K562 (cell line): ENCODE measurements at regions of chr17 and their contacts with region 1.

Region 1: GRCh38 chr17:1908699-1909309 is 79.0 kb downstream of the RPA1 start:
- DNase-seq: peak; percentile 26 to 68 (median 44)
- ATAC-seq: peak; percentile 92
- H3K4me3 ChIP-seq: no peak overlapping the region
- H3K27ac ChIP-seq: no peak overlapping the region
- H3K4me1 ChIP-seq: peaks cover 0 to 16% of the 10 kb centered on the region in 2 experiments; a peak in 3 of 5 replicates
- H3K27me3 ChIP-seq: peaks cover 21 to 36% of the 10 kb centered on the region in 2 experiments; a peak in 4 of 5 replicates
- CTCF ChIP-seq: peak; percentile 58 to 77 (median 75)
- EP300 ChIP-seq: no peak
- POLR2A ChIP-seq: no peak
- RAD21 ChIP-seq: peak; percentile 71 to 84

Region 2: DNA sequence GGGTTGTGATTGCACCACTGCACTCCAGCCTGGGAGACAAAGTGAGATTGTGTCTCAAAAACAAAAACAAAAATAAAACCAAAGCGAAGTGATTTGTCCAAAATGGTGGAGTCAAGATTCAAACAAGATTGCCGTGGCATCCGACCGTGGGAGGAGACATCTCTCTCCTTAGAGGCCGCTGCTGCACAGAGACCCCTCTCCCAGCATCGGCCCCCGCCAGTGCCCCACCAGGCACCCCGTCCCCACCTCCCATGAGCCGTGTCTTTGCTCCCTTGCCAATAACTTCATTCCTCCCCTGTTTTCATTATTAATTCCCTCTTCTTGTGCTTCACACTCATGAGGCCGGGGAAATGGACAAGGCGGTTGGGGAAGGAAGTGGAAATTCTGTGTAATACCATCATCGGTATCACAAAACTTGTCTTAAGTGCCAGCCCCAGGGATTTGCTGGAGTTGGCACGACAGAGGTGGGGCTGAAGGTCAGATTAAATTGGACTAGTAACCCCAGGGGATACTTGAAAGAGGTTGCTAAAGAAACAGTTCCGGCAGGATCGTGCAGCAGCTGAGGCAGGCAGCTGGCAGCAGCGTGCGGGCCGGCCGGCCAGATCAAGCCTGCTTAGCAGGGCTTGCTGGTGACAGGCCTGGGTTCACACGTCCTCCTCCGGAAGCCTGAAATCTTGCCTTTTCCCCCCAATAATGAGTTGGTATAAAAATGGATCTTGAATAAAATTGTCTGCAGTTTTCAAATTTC is 49.5 kb after region 1 on chr17:
- CTCF ChIA-PET with region 1: no interaction called
- POLR2A ChIA-PET with region 1: no interaction called
- in situ Hi-C with region 1: no loop called
- intact Hi-C with region 1: no loop called
- DNase-seq: no peak
- ATAC-seq: no peak
- H3K4me3 ChIP-seq: no peak overlapping the region
- H3K27ac ChIP-seq: no peak overlapping the region
- H3K4me1 ChIP-seq: peaks cover 0 to 7% of the 10 kb centered on the region in 2 experiments; a peak in 3 of 5 replicates
- H3K27me3 ChIP-seq: peaks cover 0 to 11% of the 10 kb centered on the region in 2 experiments; a peak in 2 of 5 replicates
- CTCF ChIP-seq: no peak
- EP300 ChIP-seq: no peak
- POLR2A ChIP-seq: no peak
- RAD21 ChIP-seq: no peak

Region 3: GRCh38 chr17:2029911-2030778 is 121.3 kb after region 1 on chr17 and contains the start of gene DPH1:
- CTCF ChIA-PET with region 1: interaction called, 6 read pairs
- POLR2A ChIA-PET with region 1: no interaction called
- in situ Hi-C with region 1: loop called (anchors 5 kb)
- intact Hi-C with region 1: loop called (anchors 2 kb)
- DNase-seq: peak; percentile 86 to 92 (median 89)
- ATAC-seq: peak; percentile 97
- H3K4me3 ChIP-seq: peak within 1 kb of the TSS; percentile 85
- H3K27ac ChIP-seq: peak within 1 kb of the TSS; percentile 62
- H3K4me1 ChIP-seq: peaks cover 8 to 33% of the 10 kb centered on the region in 2 experiments; a peak in 4 of 5 replicates
- H3K27me3 ChIP-seq: peaks cover 0 to 6% of the 10 kb centered on the region in 2 experiments; a peak in 1 of 5 replicates
- CTCF ChIP-seq: no peak; a peak in 1 of 6 replicates
- EP300 ChIP-seq: no peak
- POLR2A ChIP-seq: peak; percentile 75
- RAD21 ChIP-seq: no peak
- polyA plus RNA-seq, gene DPH1: 0.42 to 0.94 TPM

Region 4: GRCh38 chr17:2049333-2050299 is 140.8 kb after region 1 on chr17:
- CTCF ChIA-PET with region 1: no interaction called
- POLR2A ChIA-PET with region 1: interaction called, 3 read pairs
- in situ Hi-C with region 1: no loop called
- intact Hi-C with region 1: loop called (anchors 5 kb)
- DNase-seq: peak; percentile 84 to 89 (median 88)
- ATAC-seq: peak; percentile 70
- H3K4me3 ChIP-seq: peak overlapping the region; percentile 59
- H3K27ac ChIP-seq: peak overlapping the region; percentile 70; the same call in 2 of the 3 replicates
- H3K4me1 ChIP-seq: peaks cover 8 to 35% of the 10 kb centered on the region in 2 experiments; a peak in 4 of 5 replicates
- H3K27me3 ChIP-seq: no peaks in the 10 kb centered on the region
- CTCF ChIP-seq: no peak
- EP300 ChIP-seq: no peak
- POLR2A ChIP-seq: no peak
- RAD21 ChIP-seq: no peak